Tibial artery (tissue), 4 donors: ENCODE measurements at regions of chr5 and their contacts with region 1.

Region 1: DNA sequence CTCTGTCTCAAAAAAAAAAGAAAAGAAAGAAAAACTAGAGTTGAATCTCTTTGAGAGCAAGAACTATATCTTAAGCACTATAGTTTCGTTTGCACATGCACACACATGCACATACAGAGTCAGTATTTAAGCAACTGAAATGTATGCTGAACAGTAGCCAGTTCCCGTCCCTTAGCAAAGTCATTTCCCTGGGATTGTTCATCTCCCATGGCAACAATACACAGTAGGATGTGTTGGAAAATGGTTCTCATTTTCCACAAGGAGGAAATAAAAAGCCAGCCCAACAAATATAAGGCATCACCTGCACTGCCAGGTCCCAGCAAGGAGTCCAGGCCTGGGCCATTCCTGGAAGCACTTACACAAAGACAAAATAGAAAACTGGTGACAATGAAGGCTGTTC is 4.2 kb upstream of the ZNF346 start:
- DNase-seq: no peak
- H3K4me3 ChIP-seq: no peak overlapping the region
- H3K27ac ChIP-seq: no peak overlapping the region
- H3K4me1 ChIP-seq: peaks cover 0 to 16% (median 10%) of the 10 kb centered on the region in 4 donors
- H3K27me3 ChIP-seq: no peaks in the 10 kb centered on the region
- CTCF ChIP-seq: no peak

Region 2: GRCh38 chr5:177089825-177090641 is 71.7 kb after region 1 on chr5:
- intact Hi-C with region 1: loop called (anchors 2 kb)
- DNase-seq: no peak
- H3K4me3 ChIP-seq: no peak overlapping the region
- H3K27ac ChIP-seq: no peak overlapping the region
- H3K4me1 ChIP-seq: peaks cover 0 to 17% (median 11%) of the 10 kb centered on the region in 4 donors
- H3K27me3 ChIP-seq: peaks cover 6 to 51% of the 10 kb centered on the region in 2 donors
- CTCF ChIP-seq: no peak

Region 3: GRCh38 chr5:178137991-178138390 is 1119.7 kb after region 1 on chr5:
- intact Hi-C with region 1: loop called (anchors 5 kb)
- DNase-seq: no peak
- H3K4me3 ChIP-seq: no peak overlapping the region
- H3K27ac ChIP-seq: no peak overlapping the region
- H3K4me1 ChIP-seq: no peaks in the 10 kb centered on the region
- H3K27me3 ChIP-seq: no peaks in the 10 kb centered on the region
- CTCF ChIP-seq: no peak